Activated CD4-positive, alpha-beta memory T cell treated with anti-CD3 and anti-CD28 coated beads for 36 hours (primary cell): ENCODE measurements at regions of chr17 and their contacts with region 1.

Region 1: DNA sequence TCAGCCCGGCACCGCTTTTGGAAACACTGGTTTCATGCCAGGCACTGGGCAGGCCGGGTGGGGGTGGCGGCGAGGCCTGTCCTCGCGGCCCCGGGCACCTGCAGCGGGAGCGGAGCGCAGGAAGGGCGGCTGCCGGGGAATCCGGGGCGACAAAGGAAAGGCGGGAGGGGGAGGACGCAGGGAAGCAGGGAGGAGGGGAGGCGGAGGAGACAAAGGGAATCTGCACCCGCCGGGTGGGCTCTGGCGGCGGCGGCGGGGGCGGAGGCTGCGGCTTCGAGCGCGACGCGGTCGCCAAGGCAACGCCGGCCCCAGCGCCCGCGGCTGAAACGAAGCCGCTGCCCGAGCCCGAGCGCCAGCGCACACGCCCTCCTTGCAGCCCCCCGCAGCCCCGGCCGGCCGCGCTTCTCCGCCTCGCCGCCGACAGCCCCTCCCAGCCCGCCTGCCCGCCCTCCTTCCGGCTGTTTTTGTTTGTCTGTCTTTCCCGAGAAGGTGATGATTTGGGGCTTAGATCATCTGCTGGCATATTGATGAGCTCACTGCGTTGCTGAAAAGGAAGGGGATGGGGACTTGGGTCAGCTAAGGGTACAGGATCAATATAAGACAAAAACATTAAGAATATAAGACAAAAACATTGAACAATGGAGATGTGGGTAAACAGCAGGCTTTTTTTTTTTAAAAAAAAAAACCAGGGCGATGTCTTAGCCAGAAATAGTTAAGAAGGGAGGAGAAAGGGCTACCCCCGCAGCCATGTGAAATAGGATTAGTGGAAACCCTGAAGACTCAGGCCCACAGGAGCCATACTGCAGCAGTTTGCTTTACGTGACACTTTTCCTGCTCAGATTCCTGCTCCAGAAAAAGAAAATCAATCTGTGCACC is 32.7 kb downstream of the CDK5R1 start:
- DNase-seq: peak; percentile 87
- H3K4me3 Mint-ChIP-seq: peak overlapping the region; percentile 79
- H3K27ac Mint-ChIP-seq: peak overlapping the region; percentile 90
- H3K4me1 Mint-ChIP-seq: peaks cover 78% of the 10 kb centered on the region
- H3K27me3 Mint-ChIP-seq: no peaks in the 10 kb centered on the region

Region 2: DNA sequence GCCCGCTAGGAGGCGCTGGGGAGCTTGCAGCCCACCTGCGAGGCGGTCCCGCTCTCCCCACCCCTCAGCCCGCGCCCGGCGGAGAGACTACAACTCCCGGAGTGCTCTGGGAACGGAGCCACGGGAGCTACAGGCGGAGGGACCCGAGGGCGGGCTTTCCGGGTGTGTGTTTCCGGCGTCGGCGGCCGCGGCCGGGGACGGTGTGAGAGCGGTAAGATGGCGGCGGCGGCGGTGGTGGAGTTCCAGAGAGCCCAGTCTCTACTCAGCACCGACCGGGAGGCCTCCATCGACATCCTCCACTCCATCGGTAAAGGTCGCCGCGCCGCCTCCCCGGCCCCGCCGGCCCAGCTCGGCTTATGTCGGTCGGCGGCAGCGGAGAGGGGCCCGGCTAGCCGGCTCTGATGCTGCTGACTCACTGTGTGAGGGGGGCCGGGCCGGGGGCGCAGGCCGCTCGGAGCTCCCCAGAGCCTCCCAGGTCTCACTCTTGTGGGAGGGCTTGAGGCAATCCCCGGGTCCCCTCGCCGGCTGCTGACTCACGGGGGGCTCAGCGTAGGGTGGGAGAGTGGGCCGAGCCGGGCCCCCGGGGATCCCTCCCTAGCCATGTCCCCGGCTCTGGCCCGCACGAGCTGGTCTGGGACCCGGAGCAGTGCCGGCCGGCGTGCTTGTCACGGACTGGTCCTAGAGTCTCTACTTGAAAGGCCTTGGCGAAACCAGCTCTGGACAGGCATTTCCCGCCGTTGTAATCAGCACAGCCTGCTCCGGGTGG is 75.0 kb before region 1 on chr17 and contains the start of gene PSMD11:
- CTCF ChIA-PET with region 1: interaction called, 9 read pairs
- POLR2A ChIA-PET with region 1: no interaction called
- intact Hi-C with region 1: loop called (anchors 1 kb)
- DNase-seq: peak; percentile 99
- H3K4me3 Mint-ChIP-seq: peak within 1 kb of the TSS; percentile 89
- H3K27ac Mint-ChIP-seq: peak within 1 kb of the TSS; percentile 91
- H3K4me1 Mint-ChIP-seq: peaks cover 49% of the 10 kb centered on the region
- H3K27me3 Mint-ChIP-seq: no peaks in the 10 kb centered on the region
- total RNA-seq, gene PSMD11: 161 to 162 TPM

Region 3: GRCh38 chr17:32491371-32492263 is 27.8 kb before region 1 on chr17:
- CTCF ChIA-PET with region 1: interaction called, 13 read pairs
- POLR2A ChIA-PET with region 1: interaction called, 38 read pairs
- intact Hi-C with region 1: loop called (anchors 1 kb)
- DNase-seq: peak; percentile 69
- H3K4me3 Mint-ChIP-seq: peak overlapping the region; percentile 87
- H3K27ac Mint-ChIP-seq: peak overlapping the region; percentile 78
- H3K4me1 Mint-ChIP-seq: peaks cover 66% of the 10 kb centered on the region
- H3K27me3 Mint-ChIP-seq: no peaks in the 10 kb centered on the region

Region 4: DNA sequence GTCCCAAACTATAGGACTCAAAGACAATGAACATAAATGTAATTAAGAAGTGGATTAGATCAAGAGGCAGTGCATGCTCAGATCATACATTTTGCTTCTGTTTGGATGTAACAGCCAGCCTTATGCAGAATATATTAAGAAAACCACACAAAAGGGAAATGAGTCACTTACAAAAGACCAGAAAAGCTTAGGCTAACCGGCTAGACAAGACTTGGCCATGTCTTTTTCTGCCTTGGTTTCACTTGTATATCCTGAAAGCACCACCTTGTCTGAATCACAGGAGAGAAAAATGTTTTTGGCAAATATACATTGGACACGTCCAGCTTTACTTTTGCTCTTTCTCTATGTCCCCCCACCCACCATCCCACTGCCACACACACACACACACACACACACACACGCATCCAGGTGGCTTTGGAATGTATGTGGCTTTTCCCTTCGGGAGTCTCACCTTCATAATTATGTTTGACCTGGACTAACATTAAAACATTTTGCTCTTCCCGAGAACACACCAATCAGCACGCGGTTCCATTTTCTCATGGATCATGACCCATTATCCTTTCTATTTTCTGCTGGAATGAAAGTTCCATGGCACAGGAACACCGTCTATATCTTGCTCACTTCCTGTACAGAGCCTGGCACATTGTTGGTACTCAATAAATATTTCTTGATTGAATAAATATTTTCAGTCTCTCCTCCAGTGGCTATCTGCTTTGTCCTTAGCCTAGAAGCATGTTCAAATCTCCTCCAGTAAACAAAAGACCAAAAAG is 31.9 kb after region 1 on chr17:
- CTCF ChIA-PET with region 1: interaction called, 4 read pairs
- POLR2A ChIA-PET with region 1: interaction called, 8 read pairs
- intact Hi-C with region 1: loop called (anchors 1 kb)
- DNase-seq: no peak
- H3K4me3 Mint-ChIP-seq: peak overlapping the region; percentile 20
- H3K27ac Mint-ChIP-seq: peak overlapping the region; percentile 59
- H3K4me1 Mint-ChIP-seq: peaks cover 39% of the 10 kb centered on the region
- H3K27me3 Mint-ChIP-seq: no peaks in the 10 kb centered on the region

Region 5: DNA sequence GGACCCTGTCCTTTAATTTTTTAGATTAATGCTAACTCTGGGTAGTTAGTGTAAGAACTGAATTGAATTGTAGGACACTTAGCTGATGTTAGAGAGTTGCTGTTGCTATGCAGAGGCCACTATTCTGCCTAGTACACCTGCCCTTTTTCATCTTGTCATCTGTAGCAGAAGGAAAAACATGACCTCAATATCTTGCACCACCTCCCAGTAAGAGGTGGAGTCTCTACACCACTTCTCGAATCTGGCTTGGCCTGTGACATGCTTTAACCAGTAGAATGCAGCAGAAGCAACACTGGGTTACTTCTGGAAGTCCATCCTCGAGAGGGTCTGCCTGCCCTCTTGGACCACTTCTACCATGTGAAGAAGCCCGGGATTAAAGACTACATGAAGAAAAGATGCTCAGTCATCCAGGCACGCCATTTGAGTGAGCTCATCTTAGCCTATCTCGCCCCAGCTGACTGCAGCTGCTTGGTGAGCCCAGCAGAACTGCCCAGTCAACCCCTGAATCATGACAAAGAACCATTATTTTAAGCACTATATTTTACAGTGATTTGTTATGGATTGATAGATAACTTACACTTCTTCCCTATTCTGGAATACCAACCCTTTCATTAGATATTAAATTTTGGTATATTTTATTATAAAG is 204.0 kb after region 1 on chr17:
- CTCF ChIA-PET with region 1: no interaction called
- POLR2A ChIA-PET with region 1: no interaction called
- intact Hi-C with region 1: no loop called
- DNase-seq: no peak
- H3K4me3 Mint-ChIP-seq: no peak overlapping the region
- H3K27ac Mint-ChIP-seq: no peak overlapping the region
- H3K4me1 Mint-ChIP-seq: no peaks in the 10 kb centered on the region
- H3K27me3 Mint-ChIP-seq: no peaks in the 10 kb centered on the region

Region 6: GRCh38 chr17:32877164-32877764 is 357.8 kb after region 1 on chr17:
- CTCF ChIA-PET with region 1: interaction called, 3 read pairs
- POLR2A ChIA-PET with region 1: interaction called, 3 read pairs
- intact Hi-C with region 1: loop called (anchors 2 kb)
- DNase-seq: peak; percentile 95
- H3K4me3 Mint-ChIP-seq: peak overlapping the region; percentile 50
- H3K27ac Mint-ChIP-seq: peak overlapping the region; percentile 76
- H3K4me1 Mint-ChIP-seq: peaks cover 32% of the 10 kb centered on the region
- H3K27me3 Mint-ChIP-seq: no peaks in the 10 kb centered on the region